ENCODE measurements at regions of chr14 and their contacts with region 1.

Region 1: GRCh38 chr14:56189307-56189706 is 71.1 kb downstream of the PELI2 start:
- DNase-seq: no peak
- H3K4me3 Mint-ChIP-seq: no peak overlapping the region
- H3K27ac Mint-ChIP-seq: no peak overlapping the region
- H3K4me1 Mint-ChIP-seq: peaks cover 8% of the 10 kb centered on the region
- H3K27me3 Mint-ChIP-seq: no peaks in the 10 kb centered on the region
- CTCF ChIP-seq: no peak

Region 2: GRCh38 chr14:55846826-55847446 is 342.4 kb before region 1 on chr14:
- CTCF ChIA-PET with region 1: no interaction called
- intact Hi-C with region 1: loop called (anchors 10 kb)
- DNase-seq: no peak
- H3K4me3 Mint-ChIP-seq: no peak overlapping the region
- H3K27ac Mint-ChIP-seq: no peak overlapping the region
- H3K4me1 Mint-ChIP-seq: peaks cover 63% of the 10 kb centered on the region
- H3K27me3 Mint-ChIP-seq: no peaks in the 10 kb centered on the region
- CTCF ChIP-seq: no peak

Region 3: DNA sequence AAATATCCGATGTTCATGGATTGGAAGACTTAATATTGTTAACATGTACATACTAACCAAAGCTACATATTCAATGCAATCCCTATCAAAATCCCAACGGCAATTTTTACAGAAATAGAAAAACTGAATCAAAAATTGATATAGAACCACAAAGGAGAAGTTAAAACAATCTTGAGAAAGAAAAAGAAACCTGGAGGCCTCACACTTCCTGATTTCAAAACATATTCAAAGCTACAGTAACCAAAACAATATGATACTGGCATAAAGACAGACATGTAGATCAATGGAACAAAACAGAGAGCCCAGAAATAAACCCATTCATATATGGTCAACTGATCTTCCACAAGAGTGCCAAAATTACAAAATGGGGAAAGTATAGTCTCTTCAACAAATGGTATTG is 76.5 kb before region 1 on chr14:
- CTCF ChIA-PET with region 1: no interaction called
- intact Hi-C with region 1: no loop called
- DNase-seq: no peak
- H3K4me3 Mint-ChIP-seq: no peak overlapping the region
- H3K27ac Mint-ChIP-seq: no peak overlapping the region
- H3K4me1 Mint-ChIP-seq: peaks cover 11% of the 10 kb centered on the region
- H3K27me3 Mint-ChIP-seq: no peaks in the 10 kb centered on the region
- CTCF ChIP-seq: no peak